Upper lobe of right lung (tissue), 1 donor: ENCODE measurements at regions of chr3 and their contacts with region 1.

Region 1: DNA sequence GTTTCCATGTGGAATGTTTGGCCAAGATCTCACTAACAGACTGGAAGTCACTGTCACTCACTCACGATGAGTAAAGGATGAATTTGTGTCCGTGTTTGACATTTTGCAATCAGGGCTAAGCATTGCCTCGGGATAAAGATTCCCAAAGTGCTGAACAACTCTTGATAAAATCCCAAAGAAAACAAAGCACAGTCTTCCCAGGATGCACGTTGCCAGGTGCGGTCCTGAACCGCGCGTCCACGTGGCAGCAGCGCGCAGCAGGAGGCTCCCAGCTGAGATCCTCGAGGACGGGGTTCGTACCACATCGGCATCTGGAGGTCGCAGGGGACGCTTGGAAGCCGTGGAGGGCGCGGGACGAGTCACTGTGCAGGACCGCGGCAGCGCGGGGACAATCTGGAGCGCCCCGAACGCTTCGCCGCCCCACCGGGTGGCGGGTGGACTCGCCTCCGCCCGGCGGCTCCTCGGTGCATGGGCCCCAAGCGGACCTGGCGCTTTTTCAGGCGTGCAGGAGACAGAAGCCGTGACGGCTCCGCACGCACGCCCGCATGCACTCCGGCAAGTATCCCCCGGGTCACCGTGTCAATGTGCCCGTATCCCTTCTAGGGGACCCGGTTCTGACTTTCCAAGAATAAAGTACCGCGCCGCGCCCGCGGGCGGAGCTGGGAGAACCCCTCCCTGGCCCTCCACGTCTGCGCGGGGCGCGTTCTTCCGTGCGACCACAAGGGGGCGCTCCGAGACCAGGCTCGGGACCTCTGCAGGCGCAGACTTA is 17.7 kb downstream of the CPN2 start:
- DNase-seq: peak; percentile 94
- ATAC-seq: peak; percentile 96
- H3K4me3 ChIP-seq: peak overlapping the region; percentile 45
- H3K27ac ChIP-seq: no peak overlapping the region
- H3K4me1 ChIP-seq: peaks cover 10% of the 10 kb centered on the region
- H3K27me3 ChIP-seq: peaks cover 20% of the 10 kb centered on the region
- CTCF ChIP-seq: peak; percentile 99

Region 2: DNA sequence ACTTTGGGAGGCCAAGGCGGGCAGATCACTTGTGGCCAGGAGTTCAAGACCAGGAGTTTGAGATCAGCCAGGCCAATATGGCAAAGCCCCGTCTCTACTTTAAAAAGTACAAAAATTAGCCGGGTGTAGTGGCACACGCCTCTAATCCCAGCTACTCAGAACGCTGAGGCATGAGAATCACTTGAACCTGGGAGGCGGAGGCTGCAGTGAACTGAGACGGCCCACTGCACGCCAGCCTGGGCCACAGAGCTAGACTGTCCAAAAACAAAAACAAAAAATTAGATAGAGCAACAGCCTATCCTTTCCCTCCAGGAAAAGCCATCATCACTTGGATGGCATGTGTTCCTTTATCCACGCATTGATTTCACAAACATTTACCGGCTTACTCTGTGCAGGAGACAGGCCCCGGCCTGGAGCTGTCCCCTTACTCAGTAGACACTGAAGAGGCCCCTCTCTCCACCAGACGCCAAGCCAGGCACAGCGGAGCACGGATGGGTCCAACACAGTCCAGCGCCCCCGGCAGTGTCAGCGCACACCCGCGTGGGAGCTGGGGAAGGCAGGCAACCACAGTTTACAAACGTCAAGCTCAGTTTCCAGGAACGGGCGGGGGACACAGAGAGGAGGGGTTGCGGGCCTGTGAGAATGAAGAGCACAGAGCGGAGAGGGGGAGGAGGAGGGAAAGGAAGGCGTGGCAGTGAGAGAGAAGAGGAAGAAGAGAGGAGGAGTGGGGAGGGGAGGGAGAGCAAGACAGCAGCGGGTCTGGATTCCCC is 62.6 kb after region 1 on chr3:
- intact Hi-C with region 1: loop called (anchors 10 kb)
- DNase-seq: peak; percentile 65
- ATAC-seq: peak; percentile 66
- H3K4me3 ChIP-seq: peak overlapping the region; percentile 31
- H3K27ac ChIP-seq: no peak overlapping the region
- H3K4me1 ChIP-seq: peaks cover 16% of the 10 kb centered on the region
- H3K27me3 ChIP-seq: peaks cover 44% of the 10 kb centered on the region
- CTCF ChIP-seq: no peak